GM18951 (cell line): ENCODE measurements at regions of chr21 and their contacts with region 1.

Region 1: DNA sequence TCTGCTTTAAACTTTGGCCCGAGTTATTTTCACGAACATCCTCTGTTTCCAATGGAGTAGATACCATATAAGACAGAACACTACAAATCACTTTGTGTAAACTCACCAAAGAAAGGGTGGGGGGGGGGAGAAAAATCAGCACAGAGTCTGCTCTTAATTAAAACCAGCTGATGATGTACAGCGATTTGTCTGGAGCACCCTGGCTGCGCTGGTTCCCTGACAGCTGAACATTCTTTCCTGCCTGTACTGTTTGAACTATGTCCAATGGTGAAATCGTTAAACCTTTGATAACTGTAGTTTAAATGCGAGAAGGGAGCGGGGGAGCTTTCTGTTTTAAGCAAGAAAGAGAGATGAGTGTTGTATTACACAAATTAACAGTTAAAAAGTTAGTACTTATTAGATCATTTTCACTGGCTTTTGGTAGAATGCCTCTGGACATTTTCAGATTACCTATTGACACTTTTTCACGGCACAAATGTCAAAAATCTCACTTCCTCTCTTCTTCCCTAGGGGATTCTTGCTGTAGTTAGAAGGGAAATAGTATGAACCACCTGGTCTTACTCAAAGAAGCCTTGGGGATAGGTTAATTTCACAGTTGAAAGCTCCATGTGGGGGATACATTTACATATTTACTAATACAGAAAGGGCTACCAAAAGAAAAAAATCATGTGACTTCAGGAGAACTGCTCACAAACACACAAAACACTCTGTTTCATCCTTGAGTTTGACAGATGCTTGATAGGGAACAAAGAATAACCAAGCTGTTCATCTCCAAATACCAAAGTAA is 140.2 kb upstream of the RUNX1 start:
- POLR2A ChIP-seq: no peak

Region 2: DNA sequence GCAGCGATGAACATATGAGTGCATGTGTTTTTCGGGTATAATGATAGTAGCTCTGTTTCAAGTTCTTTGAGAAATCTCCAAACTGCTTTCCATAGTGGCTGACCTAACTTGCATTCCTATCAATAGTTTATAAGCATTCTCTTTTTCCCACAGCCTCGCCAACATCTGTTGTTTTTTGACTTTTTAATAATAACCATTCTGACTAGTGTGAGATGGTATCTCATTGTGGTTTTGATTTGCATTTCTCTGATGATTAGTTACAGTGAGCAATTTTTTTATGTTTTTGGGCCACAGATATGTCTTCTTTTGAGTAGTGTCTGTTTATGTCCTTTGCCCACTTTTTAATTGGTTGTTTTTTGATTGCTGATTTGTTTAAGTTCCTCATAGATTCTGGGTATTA is 129.5 kb before region 1 on chr21:
- in situ Hi-C with region 1: loop called (anchors 10 kb)
- POLR2A ChIP-seq: no peak

Region 3: GRCh38 chr21:35748678-35749314 is 559.5 kb after region 1 on chr21:
- in situ Hi-C with region 1: no loop called
- POLR2A ChIP-seq: no peak